Gastrocnemius medialis (tissue), 4 donors: ENCODE measurements at regions of chr5 and their contacts with region 1.

Region 1: DNA sequence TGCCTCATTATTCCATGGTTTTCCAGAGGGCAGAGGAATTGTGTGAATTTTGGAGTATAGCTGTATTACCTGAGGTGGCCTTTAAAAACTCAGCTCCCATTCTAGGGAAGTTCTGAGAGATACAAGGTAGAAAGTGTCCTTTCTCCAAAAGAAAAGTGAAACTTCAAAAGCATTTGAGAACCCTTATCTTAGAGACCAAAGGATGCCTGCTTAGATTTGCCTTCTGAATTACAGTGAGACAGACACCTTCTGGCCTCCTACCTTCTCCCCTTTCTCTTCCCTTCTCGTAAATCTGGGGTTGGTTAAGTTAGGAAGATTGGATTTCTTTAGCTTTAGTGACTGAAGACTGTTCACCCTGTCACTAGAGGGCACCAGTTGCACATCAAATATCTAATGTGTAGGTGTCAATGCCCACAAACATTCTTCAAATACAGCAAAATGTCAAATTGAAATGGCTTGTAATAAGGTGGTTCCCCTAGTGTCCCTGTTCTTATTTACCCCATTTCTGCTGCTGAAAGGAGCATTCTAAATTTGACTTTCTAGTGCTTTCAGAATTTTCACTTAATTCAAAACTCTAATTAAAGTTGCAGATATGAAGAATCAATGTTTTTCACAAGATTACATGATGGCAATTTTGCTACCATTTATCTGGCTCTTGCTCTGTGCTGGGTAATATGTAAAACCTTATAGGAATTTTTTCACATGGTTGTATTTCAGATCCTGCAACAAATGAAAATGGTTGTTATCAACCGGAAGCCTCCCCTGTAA is 46.7 kb downstream of the PRRC1 start:
- DNase-seq: peak in 1 of 2 donors; percentile 16
- ATAC-seq: peak; percentile 79 to 87
- H3K4me3 ChIP-seq: no peak overlapping the region
- H3K27ac ChIP-seq: peak overlapping the region in 1 of 4 donors; percentile 27
- H3K4me1 ChIP-seq: peaks cover 12 to 25% of the 10 kb centered on the region in 2 donors
- H3K27me3 ChIP-seq: no peaks in the 10 kb centered on the region
- CTCF ChIP-seq: peak; percentile 58 to 84 (median 71)
- POLR2A ChIP-seq: no peak

Region 2: DNA sequence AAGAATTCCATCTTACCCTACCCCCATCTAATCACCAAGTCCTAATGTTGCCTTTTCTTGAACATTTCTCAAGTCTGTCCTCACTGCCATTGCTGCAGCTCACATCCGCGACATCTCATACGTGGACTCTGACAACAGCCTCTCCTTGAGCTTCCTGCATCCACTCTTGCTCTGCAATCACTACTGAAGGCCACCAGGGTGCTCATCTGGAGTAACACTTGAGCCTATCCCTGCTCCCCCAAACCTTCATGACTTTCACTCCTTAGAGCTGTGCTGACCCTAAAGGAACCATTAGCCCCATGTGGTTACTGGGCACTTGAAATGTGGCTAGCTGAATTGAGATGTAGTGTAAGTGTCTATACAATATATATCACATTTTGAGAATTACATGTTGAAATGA is 38.3 kb after region 1 on chr5:
- in situ Hi-C with region 1: no loop called
- intact Hi-C with region 1: no loop called
- DNase-seq: no peak
- ATAC-seq: no peak
- H3K4me3 ChIP-seq: no peak overlapping the region
- H3K27ac ChIP-seq: no peak overlapping the region
- H3K4me1 ChIP-seq: peaks cover 6 to 11% of the 10 kb centered on the region in 2 donors
- H3K27me3 ChIP-seq: no peaks in the 10 kb centered on the region
- CTCF ChIP-seq: no peak
- POLR2A ChIP-seq: no peak

Region 3: GRCh38 chr5:127697894-127698600 is 133.9 kb after region 1 on chr5:
- in situ Hi-C with region 1: no loop called
- intact Hi-C with region 1: loop called (anchors 5 kb)
- DNase-seq: no peak
- ATAC-seq: no peak
- H3K4me3 ChIP-seq: no peak overlapping the region
- H3K27ac ChIP-seq: peak overlapping the region in 3 of 4 donors; percentile 12 to 89 (median 87)
- H3K4me1 ChIP-seq: peaks cover 31 to 36% of the 10 kb centered on the region in 2 donors
- H3K27me3 ChIP-seq: no peaks in the 10 kb centered on the region
- CTCF ChIP-seq: no peak
- POLR2A ChIP-seq: no peak

Region 4: GRCh38 chr5:127723572-127723971 is 159.4 kb after region 1 on chr5:
- in situ Hi-C with region 1: loop called in 1 of 4 experiments (anchors 10 kb)
- intact Hi-C with region 1: no loop called
- DNase-seq: peak; percentile 16 to 18
- ATAC-seq: no peak
- H3K4me3 ChIP-seq: no peak overlapping the region
- H3K27ac ChIP-seq: no peak overlapping the region
- H3K4me1 ChIP-seq: peaks cover 3% of the 10 kb centered on the region in 2 donors
- H3K27me3 ChIP-seq: no peaks in the 10 kb centered on the region
- CTCF ChIP-seq: no peak
- POLR2A ChIP-seq: no peak

Region 5: DNA sequence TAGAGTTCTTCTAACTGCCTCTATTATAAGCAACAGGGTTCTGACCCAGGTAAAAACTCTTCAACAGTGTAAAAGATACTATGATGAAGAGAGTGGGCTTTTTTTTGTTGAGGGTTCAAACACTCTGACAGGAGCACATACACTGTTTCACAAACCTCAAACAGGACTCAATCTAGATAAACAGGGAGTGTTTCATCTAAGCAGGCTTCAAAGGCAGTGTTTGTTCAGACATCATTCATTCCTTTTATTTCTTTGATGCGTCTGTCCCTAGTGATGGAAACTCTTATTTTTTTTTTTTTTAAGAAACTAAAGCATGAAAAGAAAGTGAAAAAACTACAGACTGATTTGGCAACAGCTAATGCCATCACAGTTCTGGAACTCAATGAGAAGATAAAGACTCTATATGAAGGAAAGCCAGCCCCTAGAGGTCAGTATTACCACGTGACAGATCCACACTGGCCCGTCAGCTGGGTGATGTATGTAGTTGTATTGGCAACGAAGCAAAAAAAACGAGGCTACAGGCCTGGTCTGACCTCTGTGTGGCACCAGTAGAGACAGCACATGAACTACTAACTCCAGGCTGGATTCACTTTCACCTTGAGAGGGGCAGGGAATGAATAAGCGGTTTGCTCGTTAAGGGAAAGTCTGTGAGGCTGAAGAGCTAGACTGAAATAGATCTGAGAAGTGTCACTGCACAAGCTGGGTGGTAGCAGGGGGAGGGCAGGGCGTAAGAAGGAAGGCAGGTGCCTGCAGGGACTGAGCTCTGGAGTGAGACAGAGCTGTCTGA is 311.2 kb after region 1 on chr5:
- in situ Hi-C with region 1: loop called in 1 of 4 experiments (anchors 25 kb)
- intact Hi-C with region 1: loop called (anchors 5 kb)
- DNase-seq: peak; percentile 36 to 79
- ATAC-seq: peak; percentile 90 to 93
- H3K4me3 ChIP-seq: peak overlapping the region in 2 of 4 donors; percentile 6 to 11
- H3K27ac ChIP-seq: peak overlapping the region; percentile 75 to 80 (median 78)
- H3K4me1 ChIP-seq: peaks cover 39 to 41% of the 10 kb centered on the region in 2 donors
- H3K27me3 ChIP-seq: no peaks in the 10 kb centered on the region
- CTCF ChIP-seq: peak in 2 of 5 experiments; percentile 21 to 27
- POLR2A ChIP-seq: no peak

Region 6: GRCh38 chr5:128083033-128083810 is 519.0 kb after region 1 on chr5 and contains the start of gene SLC12A2:
- in situ Hi-C with region 1: loop called in 2 of 4 experiments (anchors 25 kb)
- intact Hi-C with region 1: loop called (anchors 2 kb)
- DNase-seq: peak; percentile 90 to 91
- ATAC-seq: peak; percentile 80 to 81
- H3K4me3 ChIP-seq: peak within 1 kb of the TSS; percentile 79 to 88 (median 84)
- H3K27ac ChIP-seq: peak within 1 kb of the TSS; percentile 93 to 99 (median 99)
- H3K4me1 ChIP-seq: peaks cover 40 to 61% of the 10 kb centered on the region in 2 donors
- H3K27me3 ChIP-seq: no peaks in the 10 kb centered on the region
- CTCF ChIP-seq: peak in 1 of 5 experiments; percentile 8
- POLR2A ChIP-seq: peak; percentile 88 to 97
- total RNA-seq, gene SLC12A2: 11.6 to 21.0 (median 17.2) TPM

Region 7: DNA sequence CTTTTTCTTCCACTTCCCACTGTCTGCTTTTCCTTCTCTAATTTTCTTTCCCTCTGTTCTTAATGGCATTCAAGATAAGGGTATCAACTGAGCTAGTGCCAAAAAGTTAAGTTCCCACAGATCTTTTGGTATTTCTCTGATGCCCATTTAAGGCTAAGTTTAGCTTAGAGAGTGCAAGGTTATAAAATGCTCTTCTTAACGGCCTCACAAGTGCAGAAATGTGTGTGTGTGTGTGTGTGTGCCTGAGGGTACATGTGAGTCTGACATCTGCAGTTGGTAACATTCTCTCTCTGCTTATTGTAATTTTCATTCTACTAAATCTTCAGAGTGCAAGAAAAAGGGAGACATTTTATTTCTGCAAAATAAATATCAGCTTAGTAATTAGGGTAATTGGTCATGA is 949.6 kb after region 1 on chr5:
- in situ Hi-C with region 1: loop called in 1 of 4 experiments (anchors 25 kb)
- intact Hi-C with region 1: no loop called
- DNase-seq: no peak
- ATAC-seq: no peak
- H3K4me3 ChIP-seq: no peak overlapping the region
- H3K27ac ChIP-seq: no peak overlapping the region
- H3K4me1 ChIP-seq: no peaks in the 10 kb centered on the region
- H3K27me3 ChIP-seq: no peaks in the 10 kb centered on the region
- CTCF ChIP-seq: no peak
- POLR2A ChIP-seq: no peak